Activated CD4-positive, alpha-beta T cell treated with anti-CD3 and anti-CD28 coated beads for 36 hours (primary cell): ENCODE measurements at regions of chr18 and their contacts with region 1.

Region 1: DNA sequence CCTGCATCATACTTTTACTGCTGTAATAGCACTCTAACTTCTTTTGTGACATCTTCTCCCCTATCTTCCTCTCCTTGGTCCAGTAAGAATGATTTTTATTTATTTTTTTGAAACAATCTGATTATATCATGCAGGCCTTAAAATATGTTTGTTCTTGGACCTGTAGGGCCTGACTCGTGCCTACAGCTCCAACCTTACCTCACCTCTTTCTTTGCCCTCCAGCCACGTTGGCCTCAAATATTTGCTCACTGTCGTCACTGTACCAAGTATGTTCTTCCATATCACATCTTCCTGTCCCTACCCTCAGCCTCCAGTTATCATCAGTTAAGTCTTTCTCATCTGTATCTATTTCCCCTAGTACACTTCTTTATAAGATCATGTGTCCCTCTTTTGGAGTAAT is 125.5 kb downstream of the CDH7 start:
- DNase-seq: no peak
- ATAC-seq: no peak
- H3K4me3 Mint-ChIP-seq: no peak overlapping the region
- H3K27ac Mint-ChIP-seq: no peak overlapping the region
- H3K4me1 Mint-ChIP-seq: no peaks in the 10 kb centered on the region
- H3K27me3 Mint-ChIP-seq: no peaks in the 10 kb centered on the region

Region 2: GRCh38 chr18:64765908-64766307 is 1110.4 kb before region 1 on chr18:
- CTCF ChIA-PET with region 1: no interaction called
- POLR2A ChIA-PET with region 1: no interaction called
- intact Hi-C with region 1: loop called in 1 of 2 experiments (anchors 10 kb)
- DNase-seq: no peak
- ATAC-seq: no peak
- H3K4me3 Mint-ChIP-seq: no peak overlapping the region
- H3K27ac Mint-ChIP-seq: no peak overlapping the region
- H3K4me1 Mint-ChIP-seq: no peaks in the 10 kb centered on the region
- H3K27me3 Mint-ChIP-seq: no peaks in the 10 kb centered on the region